ENCODE measurements at regions of chr1 and their contacts with region 1.

Region 1: GRCh38 chr1:54800899-54801759 is at the start of gene TTC22:
- DNase-seq: peak; percentile 71
- H3K4me3 Mint-ChIP-seq: peak within 1 kb of the TSS; percentile 76
- H3K27ac Mint-ChIP-seq: no peak within 1 kb of the TSS
- H3K4me1 Mint-ChIP-seq: peaks cover 32% of the 10 kb centered on the region
- H3K27me3 Mint-ChIP-seq: no peaks in the 10 kb centered on the region
- CTCF ChIP-seq: peak; percentile 43
- total RNA-seq, gene TTC22: 3.0 and 3.1 TPM in 2 replicates

Region 2: GRCh38 chr1:54406339-54407153 is 394.6 kb before region 1 on chr1 and contains the start of gene SSBP3:
- CTCF ChIA-PET with region 1: interaction called, 3 read pairs
- POLR2A ChIA-PET with region 1: interaction called, 10 read pairs
- intact Hi-C with region 1: no loop called
- DNase-seq: peak; percentile 91
- H3K4me3 Mint-ChIP-seq: peak within 1 kb of the TSS; percentile 83
- H3K27ac Mint-ChIP-seq: peak within 1 kb of the TSS; percentile 96
- H3K4me1 Mint-ChIP-seq: peaks cover 28% of the 10 kb centered on the region
- H3K27me3 Mint-ChIP-seq: no peaks in the 10 kb centered on the region
- CTCF ChIP-seq: no peak
- total RNA-seq, gene SSBP3: 6.5 and 8.6 TPM in 2 replicates

Region 3: GRCh38 chr1:54499360-54500106 is 301.6 kb before region 1 on chr1:
- CTCF ChIA-PET with region 1: interaction called, 13 read pairs
- POLR2A ChIA-PET with region 1: no interaction called
- intact Hi-C with region 1: no loop called
- DNase-seq: peak; percentile 23
- H3K4me3 Mint-ChIP-seq: peak overlapping the region; percentile 59
- H3K27ac Mint-ChIP-seq: no peak overlapping the region
- H3K4me1 Mint-ChIP-seq: no peaks in the 10 kb centered on the region
- H3K27me3 Mint-ChIP-seq: no peaks in the 10 kb centered on the region
- CTCF ChIP-seq: peak; percentile 16

Region 4: GRCh38 chr1:54715493-54716298 is 85.4 kb before region 1 on chr1 and contains the start of gene TTC4:
- CTCF ChIA-PET with region 1: interaction called, 6 read pairs
- POLR2A ChIA-PET with region 1: interaction called, 8 read pairs
- intact Hi-C with region 1: loop called (anchors 5 kb)
- DNase-seq: peak; percentile 85
- H3K4me3 Mint-ChIP-seq: peak within 1 kb of the TSS; percentile 87
- H3K27ac Mint-ChIP-seq: peak within 1 kb of the TSS; percentile 94
- H3K4me1 Mint-ChIP-seq: peaks cover 7% of the 10 kb centered on the region
- H3K27me3 Mint-ChIP-seq: peaks cover 18% of the 10 kb centered on the region
- CTCF ChIP-seq: no peak
- total RNA-seq, gene TTC4: 25.0 and 25.4 TPM in 2 replicates

Region 5: DNA sequence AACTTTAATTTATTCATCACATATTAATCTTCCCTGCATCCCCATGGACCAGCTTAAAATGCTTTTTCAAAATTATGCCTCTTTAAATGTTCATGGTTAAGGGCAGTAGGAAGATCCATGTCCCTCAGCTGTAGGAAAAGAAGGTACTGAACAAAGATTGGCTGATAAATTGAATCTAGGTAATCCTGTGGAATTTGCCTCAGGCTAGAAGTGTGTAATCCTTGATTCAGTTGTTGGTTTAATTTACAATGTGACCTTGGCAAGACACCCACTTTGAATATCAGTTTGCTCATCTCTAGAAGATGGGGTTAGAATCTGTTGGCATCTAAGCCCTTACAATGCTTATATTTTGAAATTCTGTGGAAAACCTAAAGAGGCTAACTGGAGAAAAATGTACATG is 79.4 kb before region 1 on chr1:
- CTCF ChIA-PET with region 1: interaction called, 10 read pairs
- POLR2A ChIA-PET with region 1: interaction called, 8 read pairs
- intact Hi-C with region 1: loop called (anchors 5 kb)
- DNase-seq: no peak
- H3K4me3 Mint-ChIP-seq: no peak overlapping the region
- H3K27ac Mint-ChIP-seq: no peak overlapping the region
- H3K4me1 Mint-ChIP-seq: no peaks in the 10 kb centered on the region
- H3K27me3 Mint-ChIP-seq: no peaks in the 10 kb centered on the region
- CTCF ChIP-seq: no peak

Region 6: DNA sequence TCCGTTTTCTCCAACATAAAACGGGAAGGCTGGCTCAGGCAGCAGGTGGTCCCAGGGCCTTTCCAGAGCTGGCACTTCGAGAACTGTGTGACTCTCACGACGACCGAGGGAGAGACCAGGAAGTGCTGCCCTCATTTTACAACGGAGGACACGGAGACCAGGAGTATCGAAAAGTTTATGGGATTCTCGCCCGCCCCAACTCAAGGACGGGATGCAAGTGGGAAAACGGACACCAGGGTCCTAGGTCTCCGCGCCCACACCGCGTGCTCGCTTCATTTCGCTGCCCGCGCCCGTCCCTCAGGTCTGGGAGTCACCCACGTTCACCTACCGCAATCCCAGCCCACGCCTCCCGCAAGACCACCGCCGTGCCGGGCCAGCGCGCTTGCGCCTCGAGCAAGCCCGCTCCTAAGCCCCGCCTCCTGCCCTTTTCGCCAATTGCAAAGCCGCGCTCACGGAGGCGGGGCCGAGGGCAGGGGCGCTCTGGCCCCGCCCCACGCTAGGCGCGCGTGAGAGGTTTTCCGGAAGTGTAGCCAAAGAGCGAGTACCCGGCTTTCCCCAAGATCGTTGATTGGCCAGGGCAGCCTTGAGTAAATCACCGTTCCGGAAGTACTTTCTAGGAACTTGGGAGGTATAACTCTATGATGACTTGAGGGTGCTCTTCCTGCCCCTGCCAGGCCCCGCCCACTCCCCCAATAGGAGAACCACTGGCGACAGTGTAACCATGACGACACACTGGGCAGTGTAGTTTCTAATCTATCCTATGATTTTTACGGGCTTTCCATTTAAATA is 36.8 kb before region 1 on chr1 and contains the start of gene PARS2:
- CTCF ChIA-PET with region 1: interaction called, 5 read pairs
- POLR2A ChIA-PET with region 1: interaction called, 8 read pairs
- intact Hi-C with region 1: loop called (anchors 5 kb)
- DNase-seq: peak; percentile 99
- H3K4me3 Mint-ChIP-seq: peak within 1 kb of the TSS; percentile 95
- H3K27ac Mint-ChIP-seq: peak within 1 kb of the TSS; percentile 95
- H3K4me1 Mint-ChIP-seq: peaks cover 8% of the 10 kb centered on the region
- H3K27me3 Mint-ChIP-seq: no peaks in the 10 kb centered on the region
- CTCF ChIP-seq: no peak
- total RNA-seq, gene PARS2: 4.7 and 5.4 TPM in 2 replicates

Region 7: DNA sequence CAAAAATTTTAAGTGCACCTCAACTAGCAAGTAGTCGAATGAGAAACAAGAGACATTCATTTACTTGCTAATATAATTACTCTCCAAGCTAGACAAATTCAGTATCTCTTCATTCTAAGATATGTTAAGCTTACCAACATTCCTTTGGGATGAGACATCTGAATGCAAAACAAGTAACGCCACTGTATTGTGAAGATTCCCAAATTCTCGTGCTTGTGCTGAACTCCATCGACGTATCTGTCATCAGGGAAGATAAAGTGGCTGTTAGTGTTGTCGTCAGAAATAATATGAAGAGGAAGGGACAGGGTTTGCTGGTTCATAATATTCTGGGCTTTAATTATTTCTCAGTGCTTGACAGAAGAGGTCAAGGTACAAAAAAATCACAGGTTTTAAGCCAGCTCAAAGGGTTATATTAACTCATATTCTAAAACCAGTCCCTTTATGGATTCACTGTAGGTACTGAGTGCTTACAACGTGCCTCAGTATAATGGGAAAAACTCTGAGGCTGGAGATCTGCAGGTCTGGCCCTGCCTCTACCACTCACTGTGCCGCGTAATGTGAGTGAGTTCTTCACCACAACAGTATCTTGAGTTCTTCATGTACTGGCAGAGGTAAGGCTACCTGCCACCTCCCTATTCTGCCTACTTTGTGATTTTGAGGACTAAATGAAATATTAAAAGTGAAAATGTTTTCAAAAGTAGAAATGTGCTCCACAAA is 280.2 kb after region 1 on chr1:
- CTCF ChIA-PET with region 1: no interaction called
- POLR2A ChIA-PET with region 1: no interaction called
- intact Hi-C with region 1: no loop called
- DNase-seq: peak; percentile 24
- H3K4me3 Mint-ChIP-seq: no peak overlapping the region
- H3K27ac Mint-ChIP-seq: peak overlapping the region; percentile 84
- H3K4me1 Mint-ChIP-seq: peaks cover 6% of the 10 kb centered on the region
- H3K27me3 Mint-ChIP-seq: no peaks in the 10 kb centered on the region
- CTCF ChIP-seq: no peak